ENCODE measurements at regions of chr12 and their contacts with region 1.

Region 1: DNA sequence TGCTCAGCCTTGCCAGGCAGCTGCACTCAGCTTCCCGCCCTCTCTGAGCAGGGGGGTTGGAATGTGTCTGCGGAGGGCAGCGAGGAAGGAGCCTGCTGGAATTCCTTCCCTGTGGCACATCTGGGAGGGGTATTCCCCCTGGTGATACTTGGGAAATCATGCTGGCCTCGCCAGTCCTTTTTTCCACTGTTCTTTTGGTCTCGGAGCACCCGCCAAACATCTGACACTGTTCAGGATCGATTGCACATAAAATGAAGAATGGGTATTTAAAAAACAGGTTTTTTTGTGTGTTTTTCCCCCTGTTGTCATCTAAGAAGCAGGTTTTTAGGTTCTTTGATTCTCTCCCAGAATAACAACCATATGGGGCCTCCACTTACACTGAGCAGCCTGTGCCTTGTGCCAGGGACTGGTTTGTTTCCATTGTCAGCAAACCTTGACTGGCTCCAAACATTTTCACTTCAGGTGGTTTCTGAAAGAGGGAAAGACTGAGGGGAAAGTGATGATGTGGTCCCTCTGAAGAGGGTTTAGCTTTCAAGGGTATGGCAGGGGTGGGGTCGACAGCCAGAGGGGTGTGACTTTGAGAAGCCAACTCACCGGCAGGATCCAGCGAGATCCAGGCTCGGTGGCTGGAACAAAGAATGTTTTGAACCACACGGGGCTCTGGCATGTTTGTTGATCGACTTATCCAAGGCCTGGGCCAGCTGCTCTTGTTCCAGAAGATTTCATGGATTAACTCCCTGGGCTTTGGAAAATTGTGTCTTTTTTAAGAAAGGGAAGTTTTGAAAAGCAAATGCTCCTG is 215.1 kb downstream of the CACNA1C start:
- DNase-seq: peak; percentile 79 to 91
- ATAC-seq: peak; percentile 67
- H3K4me3 ChIP-seq: no peak overlapping the region
- H3K27ac ChIP-seq: peak overlapping the region; percentile 58 to 98
- H3K4me1 ChIP-seq: peaks cover 8 to 10% of the 10 kb centered on the region in 2 donors
- H3K27me3 ChIP-seq: no peaks in the 10 kb centered on the region

Region 2: DNA sequence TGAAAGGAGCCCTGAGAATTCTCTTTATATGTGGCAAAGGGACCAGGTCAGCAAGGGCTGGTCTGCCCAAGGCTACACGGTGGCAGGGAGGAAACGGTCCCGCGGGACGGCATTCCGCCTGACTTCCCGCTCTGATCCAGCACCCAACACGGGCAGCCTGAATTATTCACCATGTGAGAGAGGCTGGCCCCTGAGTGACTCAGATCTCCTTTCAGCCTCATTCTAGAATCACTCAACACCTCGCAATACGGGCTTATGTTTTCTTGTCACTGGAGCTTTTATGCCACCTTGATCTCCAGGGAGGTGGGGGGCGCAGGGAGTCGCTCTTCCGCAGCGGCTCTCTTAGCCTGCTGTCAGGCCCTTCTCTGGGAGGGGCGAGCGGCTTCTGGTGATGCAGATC is 439.0 kb before region 1 on chr12:
- intact Hi-C with region 1: no loop called
- DNase-seq: peak in 1 of 2 donors; percentile 4
- ATAC-seq: no peak
- H3K4me3 ChIP-seq: no peak overlapping the region
- H3K27ac ChIP-seq: no peak overlapping the region
- H3K4me1 ChIP-seq: no peaks in the 10 kb centered on the region
- H3K27me3 ChIP-seq: no peaks in the 10 kb centered on the region

Region 3: GRCh38 chr12:2057041-2057794 is 210.7 kb before region 1 on chr12:
- intact Hi-C with region 1: loop called (anchors 5 kb)
- DNase-seq: peak; percentile 73 to 88
- ATAC-seq: peak; percentile 37
- H3K4me3 ChIP-seq: no peak overlapping the region
- H3K27ac ChIP-seq: peak overlapping the region; percentile 3 to 15
- H3K4me1 ChIP-seq: no peaks in the 10 kb centered on the region
- H3K27me3 ChIP-seq: no peaks in the 10 kb centered on the region

Region 4: GRCh38 chr12:2170376-2170775 is 97.5 kb before region 1 on chr12:
- intact Hi-C with region 1: loop called in 1 of 2 experiments (anchors 5 kb)
- DNase-seq: no peak
- ATAC-seq: peak; percentile 48
- H3K4me3 ChIP-seq: no peak overlapping the region
- H3K27ac ChIP-seq: peak overlapping the region in 1 of 2 donors; percentile 14
- H3K4me1 ChIP-seq: peaks cover 4 to 19% of the 10 kb centered on the region in 2 donors
- H3K27me3 ChIP-seq: no peaks in the 10 kb centered on the region

Region 5: GRCh38 chr12:2179953-2180736 is 87.8 kb before region 1 on chr12:
- intact Hi-C with region 1: loop called in 1 of 2 experiments (anchors 5 kb)
- DNase-seq: peak; percentile 91 to 93
- ATAC-seq: peak; percentile 79
- H3K4me3 ChIP-seq: no peak overlapping the region
- H3K27ac ChIP-seq: peak overlapping the region; percentile 14 to 97
- H3K4me1 ChIP-seq: peaks cover 2 to 11% of the 10 kb centered on the region in 2 donors
- H3K27me3 ChIP-seq: no peaks in the 10 kb centered on the region

Measured in aorta (tissue), 5 donors.